Activated CD4-positive, alpha-beta T cell treated with anti-CD3 and anti-CD28 coated beads, Interleukin-2, amount 10 ng/mL, durations not matched to agents 24 days and 14 days (primary cell): ENCODE measurements at regions of chr7 and their contacts with region 1.

Region 1: DNA sequence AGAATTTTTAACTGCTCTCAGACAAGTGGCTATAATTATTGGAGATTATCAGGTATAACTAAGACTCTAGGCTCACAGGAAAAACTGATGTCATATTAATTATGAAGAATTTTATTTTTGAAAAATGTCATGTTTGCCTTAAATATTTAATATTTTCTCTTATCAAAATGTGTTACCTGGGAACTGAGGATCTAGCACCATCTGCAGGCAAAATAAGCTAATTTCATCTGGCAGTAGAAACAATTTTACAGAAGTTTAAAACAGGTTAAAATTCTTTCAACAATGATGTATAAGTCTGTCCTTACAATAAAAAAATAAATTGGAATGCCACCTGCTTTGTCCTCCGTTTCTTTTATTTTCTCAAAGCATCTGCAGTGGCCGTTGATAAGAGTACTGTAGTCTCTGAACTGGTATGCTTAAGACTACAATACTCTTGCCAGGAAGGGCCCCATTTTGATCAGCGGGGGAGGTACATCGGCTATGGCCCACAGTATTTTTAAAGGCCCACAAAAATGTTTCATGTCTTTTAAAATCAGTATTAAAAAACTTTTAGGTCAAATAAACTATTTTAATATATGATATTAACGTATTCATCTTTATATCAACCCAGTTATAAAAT is 81.3 kb downstream of the VWDE start:
- DNase-seq: peak; percentile 63
- H3K4me3 Mint-ChIP-seq: no peak overlapping the region
- H3K27ac Mint-ChIP-seq: no peak overlapping the region
- H3K4me1 Mint-ChIP-seq: no peaks in the 10 kb centered on the region
- H3K27me3 Mint-ChIP-seq: no peaks in the 10 kb centered on the region

Region 2: DNA sequence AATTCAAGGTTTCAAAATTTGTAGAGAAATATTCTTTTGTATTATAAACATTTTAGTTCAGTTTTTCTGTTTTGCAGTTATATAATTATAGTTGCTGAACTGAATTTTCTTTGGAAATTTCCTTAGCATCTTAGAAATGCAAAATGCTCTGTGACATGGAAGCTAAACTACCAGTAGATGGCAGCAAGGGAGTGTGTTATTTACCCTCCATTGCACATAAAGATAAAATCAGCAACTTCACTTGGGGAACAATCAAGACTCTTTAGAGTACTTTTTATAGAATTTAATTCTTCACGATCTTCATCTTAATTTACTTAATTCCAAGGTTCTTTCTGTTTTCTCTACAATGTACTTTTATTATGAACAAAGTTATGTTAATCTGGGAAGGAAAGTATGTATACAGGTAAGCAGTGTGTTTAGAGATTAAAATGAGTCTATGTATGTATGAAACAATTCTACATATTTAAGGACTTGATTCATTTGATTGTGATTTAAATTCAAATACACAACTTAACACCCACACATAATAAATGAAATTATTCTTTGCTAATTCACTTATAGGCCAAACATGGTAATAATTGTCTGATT is 894.6 kb before region 1 on chr7:
- intact Hi-C with region 1: loop called (anchors 2 kb)
- DNase-seq: no peak
- H3K4me3 Mint-ChIP-seq: no peak overlapping the region
- H3K27ac Mint-ChIP-seq: no peak overlapping the region
- H3K4me1 Mint-ChIP-seq: no peaks in the 10 kb centered on the region
- H3K27me3 Mint-ChIP-seq: no peaks in the 10 kb centered on the region

Region 3: DNA sequence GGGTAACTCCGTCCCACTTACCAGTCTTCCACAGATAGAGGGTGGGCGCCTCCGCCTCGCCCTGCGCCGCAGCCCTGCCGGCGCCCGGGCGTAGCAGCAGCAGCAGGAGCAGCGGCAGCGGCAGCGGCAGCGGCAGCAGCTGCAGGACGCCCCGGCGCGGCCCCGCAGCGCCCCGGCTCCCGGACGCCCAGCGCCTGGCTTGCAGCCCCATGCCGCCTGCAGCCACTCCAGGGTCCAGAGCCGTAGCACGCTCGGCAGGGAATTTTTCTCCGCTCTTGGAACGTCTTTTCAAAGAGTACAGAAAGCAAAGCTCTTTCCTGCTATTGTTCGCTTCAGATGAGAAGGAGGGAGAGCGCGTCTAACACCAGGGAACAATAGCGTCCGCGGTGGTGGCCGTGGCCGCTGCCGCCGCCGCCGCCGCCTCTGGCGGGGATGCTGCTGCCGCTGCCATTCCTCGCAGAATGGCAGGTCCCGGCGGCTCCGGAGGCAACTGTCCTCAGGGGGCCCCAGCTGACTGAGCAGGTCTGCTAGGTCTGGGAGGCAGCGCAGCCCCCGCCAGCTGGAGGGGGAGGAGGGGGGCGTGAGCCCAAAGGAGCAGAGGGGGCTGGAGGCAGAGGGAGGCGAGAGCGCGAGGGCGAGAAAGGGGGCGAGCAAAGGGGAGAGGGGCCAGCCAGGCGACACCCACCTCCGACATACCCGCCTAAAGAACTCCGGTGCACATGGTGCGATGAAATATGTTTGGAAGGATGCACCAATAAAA is 490.5 kb before region 1 on chr7 and contains the start of gene THSD7A:
- intact Hi-C with region 1: loop called (anchors 10 kb)
- DNase-seq: no peak
- H3K4me3 Mint-ChIP-seq: peak within 1 kb of the TSS; percentile 48
- H3K27ac Mint-ChIP-seq: no peak within 1 kb of the TSS
- H3K4me1 Mint-ChIP-seq: peaks cover 12% of the 10 kb centered on the region
- H3K27me3 Mint-ChIP-seq: peaks cover 42% of the 10 kb centered on the region
- total RNA-seq, gene THSD7A: not detected in 2 replicates

Region 4: DNA sequence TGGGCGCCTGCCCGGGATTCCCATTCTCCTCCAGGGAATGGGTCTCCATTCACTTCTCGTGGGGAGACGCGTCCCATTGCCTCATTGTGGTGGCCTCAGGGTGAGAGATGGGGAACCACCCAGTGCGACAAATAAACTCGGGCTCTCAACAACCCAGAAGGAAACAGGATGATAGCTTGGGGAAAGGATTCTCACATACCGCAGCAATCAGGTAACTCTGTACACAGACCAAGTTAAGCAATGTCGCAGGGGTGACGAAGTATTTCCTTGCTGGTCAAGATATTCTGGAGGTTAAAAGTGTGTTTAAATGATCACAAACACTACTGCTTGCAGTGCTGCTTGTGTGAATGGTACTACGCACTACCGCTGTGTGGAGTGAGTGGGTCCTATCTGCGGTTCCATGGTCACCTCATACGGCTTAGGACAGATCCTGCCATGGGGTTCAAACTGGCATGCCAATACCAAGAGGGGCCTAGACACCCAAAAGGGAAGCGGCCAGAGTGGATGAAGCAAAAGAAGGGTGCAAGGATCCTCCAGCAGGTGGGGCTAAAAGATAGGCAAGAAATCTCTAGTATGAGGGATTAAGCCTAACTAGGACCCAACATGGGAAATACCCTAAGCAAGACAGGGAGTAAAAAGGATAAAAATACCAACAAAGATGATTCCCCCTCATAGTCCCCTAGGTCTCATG is 255.1 kb before region 1 on chr7:
- intact Hi-C with region 1: loop called (anchors 1 kb)
- DNase-seq: peak; percentile 87
- H3K4me3 Mint-ChIP-seq: no peak overlapping the region
- H3K27ac Mint-ChIP-seq: no peak overlapping the region
- H3K4me1 Mint-ChIP-seq: peaks cover 2% of the 10 kb centered on the region
- H3K27me3 Mint-ChIP-seq: peaks cover 2% of the 10 kb centered on the region

Region 5: DNA sequence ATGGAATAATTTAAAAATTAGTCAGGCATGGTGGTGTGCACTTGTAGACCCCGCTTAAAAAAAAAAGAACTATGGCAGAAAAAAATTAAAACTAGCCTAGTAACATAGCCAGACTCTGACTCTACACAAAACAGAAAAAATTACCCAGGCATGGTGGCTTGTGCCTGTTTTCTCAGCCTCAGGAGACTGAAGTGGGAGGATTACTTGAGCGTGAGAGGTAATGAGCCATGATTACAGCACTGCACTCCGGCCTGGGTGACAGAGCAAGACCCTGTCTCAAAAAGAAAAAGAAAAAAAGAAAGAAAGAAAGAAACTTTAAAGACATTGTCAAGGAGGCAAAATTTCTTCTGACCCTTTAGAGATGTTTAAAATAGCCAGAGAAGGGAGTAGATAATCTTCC is 220.3 kb before region 1 on chr7:
- intact Hi-C with region 1: no loop called
- DNase-seq: no peak
- H3K4me3 Mint-ChIP-seq: no peak overlapping the region
- H3K27ac Mint-ChIP-seq: no peak overlapping the region
- H3K4me1 Mint-ChIP-seq: no peaks in the 10 kb centered on the region
- H3K27me3 Mint-ChIP-seq: peaks cover 9% of the 10 kb centered on the region